ENCODE measurements at regions of chr2 and their contacts with region 1.

Region 1: GRCh38 chr2:16960579-16960978 is 294.9 kb upstream of the CYRIA start:
- DNase-seq: peak; percentile 70
- ATAC-seq: peak; percentile 74
- H3K4me3 ChIP-seq: peak overlapping the region in 1 of 5 experiments; percentile 23
- H3K4me3 Mint-ChIP-seq: peak overlapping the region; percentile 85
- H3K27ac ChIP-seq: peak overlapping the region; percentile 53 to 65
- H3K27ac Mint-ChIP-seq: peak overlapping the region; percentile 92
- H3K4me1 ChIP-seq: peaks cover 28 to 43% of the 10 kb centered on the region in 2 donors
- H3K4me1 Mint-ChIP-seq: peaks cover 43% of the 10 kb centered on the region
- H3K27me3 ChIP-seq: no peaks in the 10 kb centered on the region
- H3K27me3 Mint-ChIP-seq: no peaks in the 10 kb centered on the region
- CTCF ChIP-seq: no peak

Region 2: GRCh38 chr2:17208511-17208910 is 247.9 kb after region 1 on chr2:
- CTCF ChIA-PET with region 1: no interaction called
- POLR2A ChIA-PET with region 1: no interaction called
- intact Hi-C with region 1: loop called (anchors 10 kb)
- DNase-seq: no peak
- ATAC-seq: no peak
- H3K4me3 ChIP-seq: no peak overlapping the region
- H3K4me3 Mint-ChIP-seq: no peak overlapping the region
- H3K27ac ChIP-seq: no peak overlapping the region
- H3K27ac Mint-ChIP-seq: no peak overlapping the region
- H3K4me1 ChIP-seq: peaks cover 7 to 9% of the 10 kb centered on the region in 2 donors
- H3K4me1 Mint-ChIP-seq: peaks cover 25% of the 10 kb centered on the region
- H3K27me3 ChIP-seq: no peaks in the 10 kb centered on the region
- H3K27me3 Mint-ChIP-seq: no peaks in the 10 kb centered on the region
- CTCF ChIP-seq: no peak

Region 3: GRCh38 chr2:17804358-17804757 is 843.8 kb after region 1 on chr2:
- CTCF ChIA-PET with region 1: no interaction called
- POLR2A ChIA-PET with region 1: interaction called, 11 read pairs
- intact Hi-C with region 1: no loop called
- DNase-seq: peak; percentile 78
- ATAC-seq: peak; percentile 83
- H3K4me3 ChIP-seq: peak overlapping the region in 2 of 5 experiments; percentile 31 to 34
- H3K4me3 Mint-ChIP-seq: peak overlapping the region; percentile 81
- H3K27ac ChIP-seq: peak overlapping the region; percentile 82 to 93
- H3K27ac Mint-ChIP-seq: peak overlapping the region; percentile 87
- H3K4me1 ChIP-seq: peaks cover 43 to 52% of the 10 kb centered on the region in 2 donors
- H3K4me1 Mint-ChIP-seq: peaks cover 70% of the 10 kb centered on the region
- H3K27me3 ChIP-seq: no peaks in the 10 kb centered on the region
- H3K27me3 Mint-ChIP-seq: no peaks in the 10 kb centered on the region
- CTCF ChIP-seq: no peak